ENCODE measurements at regions of chr12 and their contacts with region 1.

Region 1: GRCh38 chr12:130818635-130819576 is 20.1 kb downstream of the STX2 start:
- DNase-seq: peak; percentile 52 to 85 (median 70)
- ATAC-seq: peak; percentile 78 to 97 (median 92)
- H3K4me3 ChIP-seq: peak overlapping the region in 11 of 12 donors; percentile 21 to 66 (median 54)
- H3K27ac ChIP-seq: peak overlapping the region in 3 of 12 donors; percentile 18 to 63 (median 24)
- H3K4me1 ChIP-seq: peaks cover 0 to 14% (median 5%) of the 10 kb centered on the region in 12 donors
- H3K27me3 ChIP-seq: no peaks in the 10 kb centered on the region
- CTCF ChIP-seq: peak; percentile 83 to 95 (median 92)
- POLR2A ChIP-seq: no peak

Region 2: DNA sequence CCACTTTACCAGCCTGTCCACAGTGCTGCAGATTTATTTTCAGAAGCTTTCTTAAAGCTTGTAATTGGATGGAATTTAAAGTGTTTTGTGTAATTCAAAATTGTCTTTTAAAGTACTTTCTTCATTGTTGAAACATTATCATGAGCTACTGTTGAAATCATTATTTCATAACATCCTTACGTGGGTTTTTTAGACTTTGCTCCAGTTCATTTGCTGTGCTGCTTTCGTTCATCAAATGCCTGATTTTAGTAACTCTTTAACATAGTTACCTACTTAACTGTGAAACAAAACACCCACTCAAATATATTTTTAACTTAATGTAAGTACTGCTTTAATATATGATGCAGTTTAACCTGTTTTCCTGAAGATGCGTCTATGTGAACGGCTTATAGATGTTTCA is 433.7 kb before region 1 on chr12:
- intact Hi-C with region 1: no loop called
- DNase-seq: no peak
- ATAC-seq: no peak
- H3K4me3 ChIP-seq: no peak overlapping the region
- H3K27ac ChIP-seq: no peak overlapping the region
- H3K4me1 ChIP-seq: no peaks in the 10 kb centered on the region
- H3K27me3 ChIP-seq: peaks cover 0 to 10% (median 0%) of the 10 kb centered on the region in 9 donors
- CTCF ChIP-seq: no peak
- POLR2A ChIP-seq: no peak

Region 3: DNA sequence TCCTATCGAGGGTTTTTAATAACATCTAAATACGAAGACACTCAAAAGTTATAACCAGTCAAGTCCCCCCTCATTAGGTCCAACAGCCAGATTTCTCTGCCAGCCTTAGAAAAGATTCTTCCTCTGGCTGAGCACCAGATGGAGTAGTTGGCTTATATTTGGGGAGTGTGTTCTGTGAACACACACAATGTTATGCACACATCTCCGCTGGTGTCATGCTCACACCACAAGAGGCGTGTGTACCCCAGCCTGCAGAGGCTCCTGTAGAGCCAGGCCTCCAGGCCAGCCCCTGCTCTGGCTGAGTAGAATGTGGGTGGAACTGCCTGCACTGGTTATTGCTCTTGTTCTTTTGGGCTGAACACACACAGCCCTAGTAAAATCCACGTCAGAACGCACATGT is 417.2 kb before region 1 on chr12:
- intact Hi-C with region 1: loop called in 2 of 10 experiments (anchors 5 to 10 kb)
- DNase-seq: no peak
- ATAC-seq: peak in 3 of 4 donors; percentile 18 to 66 (median 49)
- H3K4me3 ChIP-seq: no peak overlapping the region
- H3K27ac ChIP-seq: no peak overlapping the region
- H3K4me1 ChIP-seq: no peaks in the 10 kb centered on the region
- H3K27me3 ChIP-seq: peaks cover 0 to 34% (median 2%) of the 10 kb centered on the region in 9 donors
- CTCF ChIP-seq: peak in 8 of 12 donors; percentile 7 to 52 (median 44)
- POLR2A ChIP-seq: no peak

Region 4: GRCh38 chr12:130761537-130762318 is 57.2 kb before region 1 on chr12:
- intact Hi-C with region 1: loop called in 3 of 10 experiments (anchors 5 kb)
- DNase-seq: peak in 4 of 5 donors; percentile 31 to 53 (median 42)
- ATAC-seq: peak; percentile 37 to 79 (median 70)
- H3K4me3 ChIP-seq: peak overlapping the region in 1 of 12 donors; percentile 8
- H3K27ac ChIP-seq: no peak overlapping the region
- H3K4me1 ChIP-seq: no peaks in the 10 kb centered on the region
- H3K27me3 ChIP-seq: peaks cover 0 to 36% (median 10%) of the 10 kb centered on the region in 9 donors
- CTCF ChIP-seq: peak; percentile 23 to 55 (median 37)
- POLR2A ChIP-seq: no peak

Region 5: DNA sequence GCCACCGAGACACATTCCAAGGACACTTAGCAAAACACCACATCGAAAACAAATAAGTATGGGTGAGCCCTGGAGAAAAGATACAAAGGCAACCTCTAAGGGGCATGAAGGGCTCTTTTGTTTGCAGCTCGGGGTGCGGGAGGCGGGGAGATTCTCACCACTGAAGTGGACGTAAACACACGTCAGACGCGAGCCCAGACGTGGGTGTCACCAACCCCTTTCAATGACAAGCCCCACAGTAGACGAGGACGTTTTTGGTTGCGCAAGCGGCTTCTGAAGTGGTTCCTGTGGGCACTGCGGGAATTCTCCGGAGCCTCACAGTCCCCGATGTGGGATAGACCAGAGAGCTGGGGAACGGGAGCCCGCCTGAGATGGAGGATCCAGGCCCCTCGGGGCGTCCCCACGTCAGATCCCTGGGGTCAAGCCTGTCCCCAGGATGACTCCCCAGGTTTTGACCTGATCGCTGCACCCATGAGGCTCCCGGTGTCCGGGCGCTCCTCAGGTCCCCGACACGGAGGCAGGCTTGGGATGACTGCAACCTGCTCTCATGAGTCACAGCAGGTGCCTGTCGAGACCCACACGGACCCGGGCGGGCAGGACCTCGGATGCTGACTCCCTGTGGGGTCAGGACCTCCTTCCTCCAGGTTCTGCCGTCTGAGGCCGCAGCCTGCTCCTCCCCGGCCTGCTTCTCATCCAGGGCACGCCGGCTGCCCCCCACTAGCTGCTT is 114.5 kb after region 1 on chr12:
- intact Hi-C with region 1: no loop called
- DNase-seq: peak in 2 of 5 donors; percentile 54 to 59
- ATAC-seq: peak; percentile 13 to 77 (median 60)
- H3K4me3 ChIP-seq: peak overlapping the region in 2 of 12 donors; percentile 2 to 35
- H3K27ac ChIP-seq: peak overlapping the region in 6 of 12 donors; percentile 5 to 70 (median 28)
- H3K4me1 ChIP-seq: peaks cover 0 to 5% (median 0%) of the 10 kb centered on the region in 12 donors
- H3K27me3 ChIP-seq: peaks cover 0 to 5% (median 0%) of the 10 kb centered on the region in 9 donors
- CTCF ChIP-seq: no peak
- POLR2A ChIP-seq: no peak

Measured in heart left ventricle (tissue), 16 donors.